ENCODE measurements at regions of chr15 and their contacts with region 1.

Region 1: GRCh38 chr15:65318870-65319356 is 14.4 kb downstream of the RNU5B-1 start:
- DNase-seq: peak in 1 of 2 donors; percentile 83
- H3K4me3 ChIP-seq: no peak overlapping the region
- H3K27ac ChIP-seq: no peak overlapping the region
- H3K4me1 ChIP-seq: no peaks in the 10 kb centered on the region
- H3K27me3 ChIP-seq: no peaks in the 10 kb centered on the region
- CTCF ChIP-seq: peak; percentile 90 to 93 (median 92)

Region 2: DNA sequence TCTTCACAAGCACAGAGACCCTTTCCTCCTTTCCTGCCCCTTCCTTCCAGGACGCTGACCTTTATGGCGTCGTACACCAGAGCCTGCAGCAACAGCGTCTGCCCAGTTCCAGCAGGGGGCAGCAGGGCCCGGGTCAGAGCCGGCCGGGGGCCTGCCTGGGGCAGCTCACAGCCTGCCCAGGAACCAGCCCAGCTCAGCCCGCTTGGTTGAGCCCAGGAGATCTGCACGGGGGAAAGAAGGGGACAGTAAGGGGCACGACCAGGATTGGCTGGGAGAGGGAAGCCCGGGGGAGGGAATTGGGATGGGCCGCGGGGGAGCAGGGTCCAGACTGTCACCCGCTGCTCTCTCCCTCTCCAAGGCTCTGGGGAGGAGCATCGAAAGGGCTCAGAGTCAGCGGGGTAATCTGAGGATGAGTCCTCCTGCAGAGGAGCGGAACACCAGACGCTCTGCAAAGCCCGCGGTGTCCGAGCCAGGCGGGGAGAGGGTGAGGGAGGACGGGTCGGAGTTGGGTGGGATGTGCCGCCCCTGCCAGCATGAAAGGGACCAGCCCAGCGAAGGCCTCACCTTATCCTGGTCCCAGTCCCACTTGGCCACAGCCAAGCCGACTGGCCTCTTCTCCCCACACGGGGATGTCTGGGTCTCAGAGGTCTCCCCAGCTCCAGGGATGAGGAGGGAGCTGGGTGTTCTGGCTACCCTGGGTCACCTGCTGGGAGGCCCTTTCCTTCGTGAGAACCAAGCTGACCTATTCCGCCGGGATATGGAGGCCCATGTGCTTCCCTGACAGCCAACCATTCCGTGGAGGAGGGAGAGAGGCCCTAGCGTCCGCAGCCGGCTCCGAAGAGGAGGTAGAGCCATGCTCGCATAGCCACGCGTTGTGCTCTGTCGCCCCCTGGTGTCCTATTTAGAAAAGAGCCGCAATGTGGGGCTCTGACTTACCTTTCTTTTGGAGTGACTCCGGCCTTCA is 66.3 kb after region 1 on chr15:
- intact Hi-C with region 1: loop called (anchors 1 kb)
- DNase-seq: peak; percentile 19 to 87
- H3K4me3 ChIP-seq: peak overlapping the region; percentile 25 to 53
- H3K27ac ChIP-seq: no peak overlapping the region
- H3K4me1 ChIP-seq: peaks cover 4 to 6% of the 10 kb centered on the region in 2 donors
- H3K27me3 ChIP-seq: no peaks in the 10 kb centered on the region
- CTCF ChIP-seq: peak; percentile 77 to 90 (median 88)